ENCODE measurements at regions of chr2 and their contacts with region 1.

Region 1: DNA sequence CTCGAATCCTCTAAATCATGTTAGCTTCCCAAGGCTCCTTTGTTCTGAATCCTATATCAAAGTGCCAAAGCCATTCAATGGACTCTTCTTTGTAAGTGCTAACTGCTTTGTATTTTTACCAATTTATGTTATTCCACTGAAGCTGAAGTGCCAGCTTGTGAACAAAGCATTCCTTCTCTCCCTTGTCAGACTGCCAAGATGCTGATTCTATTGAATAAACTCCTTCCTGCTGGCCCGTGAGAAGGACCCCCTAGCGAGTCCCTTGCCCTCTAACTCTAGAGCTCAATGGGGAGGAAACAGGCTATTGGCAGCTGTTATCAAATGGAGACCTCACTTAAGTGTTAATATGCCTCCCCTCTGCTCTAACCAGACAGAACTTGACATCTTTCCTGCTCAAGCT is 1097.9 kb upstream of the CNTNAP5 start:
- DNase-seq: no peak
- H3K4me3 ChIP-seq: no peak overlapping the region
- H3K27ac ChIP-seq: no peak overlapping the region
- H3K4me1 ChIP-seq: no peaks in the 10 kb centered on the region
- H3K27me3 ChIP-seq: no peaks in the 10 kb centered on the region
- CTCF ChIP-seq: no peak
- EP300 ChIP-seq: no peak
- POLR2A ChIP-seq: no peak

Region 2: DNA sequence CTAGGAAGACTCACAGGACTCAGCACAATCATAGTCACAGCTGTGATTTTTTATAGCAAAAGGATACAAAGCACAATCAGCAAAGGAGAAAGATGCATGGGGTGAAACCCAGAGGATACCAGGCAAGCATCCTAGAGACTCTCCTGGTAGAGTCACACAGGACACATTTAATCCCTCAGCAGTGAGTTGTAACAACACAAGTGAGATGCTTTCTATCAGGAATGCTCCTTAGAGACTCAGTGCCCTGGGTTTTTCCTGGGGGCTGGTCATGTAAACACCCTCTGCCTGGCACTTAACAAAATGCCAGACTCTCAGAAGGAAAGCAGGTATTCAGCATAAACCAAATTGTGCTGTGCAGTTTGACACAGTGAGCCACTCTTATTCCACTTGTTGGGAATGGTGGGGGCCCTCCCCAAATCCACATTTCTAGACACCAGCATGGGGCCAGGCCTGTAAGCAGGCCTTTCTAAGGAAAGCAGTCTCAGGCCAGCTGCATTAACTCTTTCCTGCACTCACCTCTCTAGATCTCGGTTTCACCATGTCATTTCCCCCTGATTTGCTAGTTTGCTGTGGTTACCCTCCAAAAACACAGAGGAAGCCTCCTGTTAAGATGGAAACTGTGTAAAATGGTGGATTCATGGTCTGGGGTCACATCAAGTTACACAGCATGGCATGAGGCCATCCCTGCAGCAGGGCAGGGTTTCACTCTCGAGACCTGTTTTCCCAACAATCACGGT is 1413.4 kb before region 1 on chr2:
- in situ Hi-C with region 1: no loop called
- intact Hi-C with region 1: no loop called
- DNase-seq: no peak
- H3K4me3 ChIP-seq: no peak overlapping the region
- H3K27ac ChIP-seq: no peak overlapping the region
- H3K4me1 ChIP-seq: no peaks in the 10 kb centered on the region
- H3K27me3 ChIP-seq: no peaks in the 10 kb centered on the region
- CTCF ChIP-seq: no peak
- EP300 ChIP-seq: no peak
- POLR2A ChIP-seq: no peak

Region 3: GRCh38 chr2:122863532-122863931 is 63.7 kb before region 1 on chr2:
- in situ Hi-C with region 1: no loop called
- intact Hi-C with region 1: no loop called
- DNase-seq: no peak
- H3K4me3 ChIP-seq: no peak overlapping the region
- H3K27ac ChIP-seq: no peak overlapping the region
- H3K4me1 ChIP-seq: no peaks in the 10 kb centered on the region
- H3K27me3 ChIP-seq: no peaks in the 10 kb centered on the region
- CTCF ChIP-seq: no peak
- EP300 ChIP-seq: no peak
- POLR2A ChIP-seq: no peak

Region 4: DNA sequence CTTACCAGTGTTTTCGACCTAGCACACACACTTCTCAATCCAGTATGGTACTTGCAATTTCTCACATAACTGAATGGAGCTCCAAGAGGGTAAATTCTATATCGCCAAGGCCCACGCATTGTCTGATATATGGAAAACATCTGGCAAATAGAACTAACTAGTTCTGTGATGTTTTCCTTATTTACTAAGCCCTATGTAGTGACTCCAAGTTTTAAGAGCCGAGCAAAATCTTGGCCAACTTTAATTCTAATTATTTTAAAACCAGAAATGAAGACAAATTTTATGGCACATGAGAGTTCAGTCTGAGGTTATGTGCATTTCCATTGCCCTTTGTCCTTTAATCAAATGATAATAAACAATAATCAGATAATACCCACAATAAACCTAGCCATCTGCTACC is 21.8 kb before region 1 on chr2:
- in situ Hi-C with region 1: no loop called
- intact Hi-C with region 1: loop called (anchors 1 kb)
- DNase-seq: no peak
- H3K4me3 ChIP-seq: no peak overlapping the region
- H3K27ac ChIP-seq: no peak overlapping the region
- H3K4me1 ChIP-seq: no peaks in the 10 kb centered on the region
- H3K27me3 ChIP-seq: no peaks in the 10 kb centered on the region
- CTCF ChIP-seq: no peak
- EP300 ChIP-seq: no peak
- POLR2A ChIP-seq: no peak